ENCODE measurements at regions of chr17 and their contacts with region 1.

Region 1: GRCh38 chr17:3845621-3846441 is at the start of gene NCBP3:
- DNase-seq: peak; percentile 90
- ATAC-seq: peak; percentile 97
- H3K4me3 Mint-ChIP-seq: peak within 1 kb of the TSS; percentile 94
- H3K27ac Mint-ChIP-seq: peak within 1 kb of the TSS; percentile 93
- H3K4me1 Mint-ChIP-seq: peaks cover 30% of the 10 kb centered on the region
- H3K27me3 Mint-ChIP-seq: peaks cover 5% of the 10 kb centered on the region
- total RNA-seq, gene NCBP3: 39.1 to 42.6 TPM

Region 2: GRCh38 chr17:3683054-3683511 is 162.7 kb before region 1 on chr17:
- CTCF ChIA-PET with region 1: interaction called, 12 read pairs
- POLR2A ChIA-PET with region 1: no interaction called
- DNase-seq: peak; percentile 74
- ATAC-seq: peak; percentile 90
- H3K4me3 Mint-ChIP-seq: no peak overlapping the region
- H3K27ac Mint-ChIP-seq: no peak overlapping the region
- H3K4me1 Mint-ChIP-seq: peaks cover 25% of the 10 kb centered on the region
- H3K27me3 Mint-ChIP-seq: no peaks in the 10 kb centered on the region

Region 3: GRCh38 chr17:3723556-3724369 is 122.1 kb before region 1 on chr17 and contains the start of gene HASPIN:
- CTCF ChIA-PET with region 1: interaction called, 20 read pairs
- POLR2A ChIA-PET with region 1: interaction called, 7 read pairs
- DNase-seq: peak; percentile 94
- ATAC-seq: peak; percentile 94
- H3K4me3 Mint-ChIP-seq: peak within 1 kb of the TSS; percentile 92
- H3K27ac Mint-ChIP-seq: peak within 1 kb of the TSS; percentile 90
- H3K4me1 Mint-ChIP-seq: peaks cover 63% of the 10 kb centered on the region
- H3K27me3 Mint-ChIP-seq: no peaks in the 10 kb centered on the region
- total RNA-seq, gene HASPIN: 27.0 to 28.1 TPM

Region 4: GRCh38 chr17:3747805-3748204 is 98.0 kb before region 1 on chr17:
- CTCF ChIA-PET with region 1: no interaction called
- POLR2A ChIA-PET with region 1: no interaction called
- DNase-seq: no peak
- ATAC-seq: no peak
- H3K4me3 Mint-ChIP-seq: no peak overlapping the region
- H3K27ac Mint-ChIP-seq: no peak overlapping the region
- H3K4me1 Mint-ChIP-seq: peaks cover 44% of the 10 kb centered on the region
- H3K27me3 Mint-ChIP-seq: peaks cover 5% of the 10 kb centered on the region

Region 5: GRCh38 chr17:3788200-3788599 is 57.6 kb before region 1 on chr17:
- CTCF ChIA-PET with region 1: no interaction called
- POLR2A ChIA-PET with region 1: no interaction called
- DNase-seq: peak; percentile 57
- ATAC-seq: peak; percentile 68
- H3K4me3 Mint-ChIP-seq: peak overlapping the region; percentile 16
- H3K27ac Mint-ChIP-seq: peak overlapping the region; percentile 51
- H3K4me1 Mint-ChIP-seq: peaks cover 66% of the 10 kb centered on the region
- H3K27me3 Mint-ChIP-seq: peaks cover 3% of the 10 kb centered on the region

Region 6: GRCh38 chr17:3865176-3865575 is 19.3 kb after region 1 on chr17:
- CTCF ChIA-PET with region 1: interaction called, 32 read pairs
- POLR2A ChIA-PET with region 1: interaction called, 3 read pairs
- DNase-seq: no peak
- ATAC-seq: no peak
- H3K4me3 Mint-ChIP-seq: no peak overlapping the region
- H3K27ac Mint-ChIP-seq: no peak overlapping the region
- H3K4me1 Mint-ChIP-seq: no peaks in the 10 kb centered on the region
- H3K27me3 Mint-ChIP-seq: no peaks in the 10 kb centered on the region

Region 7: DNA sequence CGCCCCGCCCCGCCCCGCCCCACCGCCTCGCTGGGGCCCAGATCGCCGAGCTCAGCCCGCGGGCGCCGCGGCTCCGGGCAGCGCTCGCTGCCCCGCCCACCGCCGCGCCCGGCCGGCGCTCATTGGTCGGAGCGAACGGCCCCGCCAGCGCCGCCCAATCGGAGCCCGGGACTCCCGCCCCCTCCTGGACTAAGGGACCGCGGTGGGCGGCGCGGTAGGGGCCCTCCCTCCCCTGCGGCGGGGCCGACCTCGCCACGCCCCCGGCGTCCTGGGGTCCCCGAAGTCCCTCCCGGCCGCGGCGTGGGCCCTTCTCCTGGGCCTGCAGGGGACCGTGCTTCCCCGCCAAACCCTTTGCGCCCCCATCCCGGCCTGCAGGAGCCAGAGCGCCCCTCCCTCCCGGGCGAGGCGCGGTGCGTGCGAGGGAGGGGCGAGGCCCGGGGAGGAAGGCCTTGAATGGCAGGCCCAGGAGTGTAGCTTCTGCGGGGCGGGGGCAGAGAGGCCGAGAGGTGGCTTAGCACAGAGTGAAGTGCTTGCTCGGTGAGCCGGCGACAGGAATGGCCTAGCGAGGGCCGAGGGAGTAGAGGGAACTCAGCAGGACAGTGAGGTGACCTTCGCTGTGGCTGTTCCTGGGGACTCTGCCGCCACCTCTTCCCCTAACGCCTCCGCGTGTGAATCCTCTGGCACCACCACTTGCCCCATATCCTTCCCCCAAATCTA is 47.3 kb after region 1 on chr17 and contains the start of gene CAMKK1:
- CTCF ChIA-PET with region 1: interaction called, 10 read pairs
- POLR2A ChIA-PET with region 1: interaction called, 3 read pairs
- DNase-seq: peak; percentile 91
- ATAC-seq: peak; percentile 88
- H3K4me3 Mint-ChIP-seq: peak within 1 kb of the TSS; percentile 79
- H3K27ac Mint-ChIP-seq: peak within 1 kb of the TSS; percentile 86
- H3K4me1 Mint-ChIP-seq: peaks cover 26% of the 10 kb centered on the region
- H3K27me3 Mint-ChIP-seq: peaks cover 2% of the 10 kb centered on the region
- total RNA-seq, gene CAMKK1: 3.3 to 4.0 TPM

Region 8: DNA sequence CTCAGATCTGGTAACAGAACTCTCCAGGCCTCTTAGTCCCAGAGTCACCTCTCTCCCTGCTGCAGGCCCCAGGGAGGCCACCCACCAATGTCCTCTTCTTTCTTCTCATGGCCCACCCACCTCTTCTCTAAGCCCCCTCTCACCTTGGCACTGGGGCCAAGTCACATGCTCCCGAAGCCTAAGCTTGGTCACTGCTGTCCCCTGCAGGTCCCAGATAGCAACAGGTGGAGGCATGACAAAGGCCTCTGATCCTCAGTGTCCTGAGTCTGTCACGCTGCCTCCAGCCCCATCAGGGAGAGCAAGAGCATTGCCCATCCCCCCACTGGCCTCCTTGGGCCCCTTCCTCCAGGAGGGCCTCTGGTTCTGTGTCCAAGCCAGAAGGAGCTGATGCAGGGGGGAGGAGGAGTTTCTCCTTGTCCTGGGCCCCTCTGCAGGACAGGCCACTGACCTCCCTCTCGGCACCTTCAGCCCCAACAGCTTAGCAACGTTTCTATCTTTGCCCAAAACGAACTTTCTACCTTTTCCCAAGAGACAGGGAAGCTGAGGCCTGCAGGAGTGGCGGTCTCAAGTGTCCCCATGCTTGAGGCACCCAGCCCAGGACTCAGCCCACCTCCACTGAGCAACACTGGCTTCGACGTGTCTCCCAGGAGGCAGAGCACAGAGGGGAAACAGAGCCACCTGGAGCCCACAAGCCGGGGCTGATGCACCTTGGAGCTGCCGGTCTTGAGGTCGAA is 61.8 kb after region 1 on chr17:
- CTCF ChIA-PET with region 1: interaction called, 18 read pairs
- POLR2A ChIA-PET with region 1: interaction called, 3 read pairs
- DNase-seq: no peak
- ATAC-seq: no peak
- H3K4me3 Mint-ChIP-seq: no peak overlapping the region
- H3K27ac Mint-ChIP-seq: no peak overlapping the region
- H3K4me1 Mint-ChIP-seq: peaks cover 21% of the 10 kb centered on the region
- H3K27me3 Mint-ChIP-seq: no peaks in the 10 kb centered on the region

Region 9: DNA sequence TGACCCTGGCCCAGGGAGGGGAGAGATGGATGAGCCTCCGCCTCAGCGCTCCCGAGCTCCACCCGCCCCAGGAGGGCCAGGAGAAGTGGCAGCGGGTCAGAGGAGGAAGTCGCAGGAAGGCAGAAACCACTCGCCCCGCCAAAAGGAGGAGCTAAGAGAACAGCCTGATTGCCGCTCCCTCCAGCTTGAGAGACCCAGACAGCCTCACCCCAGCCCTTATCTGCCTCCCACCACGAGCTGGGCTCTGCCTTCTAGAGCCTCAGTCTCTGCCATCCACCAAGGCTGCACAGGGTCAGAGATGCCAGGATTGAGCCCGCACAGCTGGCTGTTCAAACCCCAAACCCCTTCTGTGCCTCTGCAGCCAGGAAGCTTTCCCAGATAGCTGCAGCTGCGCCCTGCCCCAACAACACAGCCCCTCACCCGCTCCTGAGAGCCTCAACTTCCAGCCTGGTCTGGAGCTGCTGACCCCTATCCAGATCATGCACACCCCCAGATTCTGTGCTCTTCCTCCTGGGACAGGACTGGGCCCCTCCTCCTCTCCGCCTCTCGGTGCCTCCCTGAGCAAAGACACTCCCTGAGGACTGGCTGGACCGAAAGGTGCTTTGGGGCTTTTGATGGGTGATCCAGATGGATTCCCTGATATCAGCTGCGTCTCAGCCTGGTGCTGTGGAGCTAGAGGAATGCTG is 119.4 kb after region 1 on chr17:
- CTCF ChIA-PET with region 1: interaction called, 10 read pairs
- POLR2A ChIA-PET with region 1: interaction called, 6 read pairs
- DNase-seq: peak; percentile 90
- ATAC-seq: peak; percentile 73
- H3K4me3 Mint-ChIP-seq: peak overlapping the region; percentile 86
- H3K27ac Mint-ChIP-seq: peak overlapping the region; percentile 94
- H3K4me1 Mint-ChIP-seq: peaks cover 42% of the 10 kb centered on the region
- H3K27me3 Mint-ChIP-seq: no peaks in the 10 kb centered on the region

Region 10: GRCh38 chr17:3983606-3984484 is 138.0 kb after region 1 on chr17:
- CTCF ChIA-PET with region 1: no interaction called
- POLR2A ChIA-PET with region 1: no interaction called
- DNase-seq: no peak
- ATAC-seq: peak; percentile 49
- H3K4me3 Mint-ChIP-seq: no peak overlapping the region
- H3K27ac Mint-ChIP-seq: no peak overlapping the region
- H3K4me1 Mint-ChIP-seq: peaks cover 26% of the 10 kb centered on the region
- H3K27me3 Mint-ChIP-seq: peaks cover 2% of the 10 kb centered on the region

Measured in activated CD8-positive, alpha-beta T cell treated with anti-CD3 and anti-CD28 coated beads, Interleukin-2, amount 10 ng/mL, durations not matched to agents 7 days and 5 days (primary cell).